ENCODE measurements at regions of chr12 and their contacts with region 1.

Region 1: DNA sequence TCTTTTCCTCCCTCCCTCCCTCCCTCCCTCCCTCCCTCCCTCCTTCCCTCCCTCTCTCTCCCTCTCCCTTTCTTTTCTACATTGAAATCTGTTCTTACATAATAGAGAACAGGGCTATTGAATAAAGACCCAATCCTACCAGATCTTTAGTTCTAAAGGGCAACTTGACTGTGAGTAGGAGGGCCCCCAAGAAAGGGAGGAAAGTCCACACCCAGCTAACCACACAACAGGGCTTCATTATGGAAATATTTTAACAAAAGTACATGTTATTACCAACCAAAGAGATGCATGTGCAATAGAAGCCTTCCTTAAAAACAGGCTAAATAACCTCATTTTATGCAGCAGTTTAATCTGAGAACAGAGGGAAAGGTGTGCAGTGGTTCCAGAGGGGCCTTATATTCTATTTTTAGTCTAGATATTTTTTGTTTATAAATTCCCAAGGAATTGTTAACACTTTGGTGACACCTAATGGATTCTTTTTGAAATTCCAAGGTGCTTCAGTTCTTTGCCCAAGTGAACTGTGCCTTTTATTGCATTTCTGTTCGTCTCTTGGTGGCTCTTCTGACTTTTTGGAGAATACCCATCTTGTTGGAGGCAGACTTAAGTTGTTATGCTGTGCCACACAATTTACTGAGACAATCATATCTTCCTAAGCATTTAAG is 63.0 kb downstream of the GNS start:
- DNase-seq: no peak
- ATAC-seq: no peak
- H3K4me3 ChIP-seq: no peak overlapping the region
- H3K4me3 Mint-ChIP-seq: peak overlapping the region in 8 of 10 donors; percentile 30 to 74 (median 50)
- H3K27ac ChIP-seq: peak overlapping the region; percentile 51
- H3K27ac Mint-ChIP-seq: peak overlapping the region in 8 of 9 donors; percentile 84 to 97 (median 92)
- H3K4me1 ChIP-seq: peaks cover 14 to 79% of the 10 kb centered on the region in 2 donors
- H3K4me1 Mint-ChIP-seq: peaks cover 58 to 86% (median 81%) of the 10 kb centered on the region in 7 donors
- H3K27me3 ChIP-seq: no peaks in the 10 kb centered on the region
- H3K27me3 Mint-ChIP-seq: no peaks in the 10 kb centered on the region

Region 2: GRCh38 chr12:64451687-64452558 is 244.3 kb before region 1 on chr12 and contains the start of gene TBK1:
- CTCF ChIA-PET with region 1: interaction called, 3 read pairs
- POLR2A ChIA-PET with region 1: no interaction called
- intact Hi-C with region 1: loop called in 1 of 2 experiments (anchors 1 kb)
- DNase-seq: peak in 8 of 9 donors; percentile 21 to 80 (median 34)
- ATAC-seq: peak; percentile 78
- H3K4me3 ChIP-seq: peak within 1 kb of the TSS; percentile 61
- H3K4me3 Mint-ChIP-seq: peak within 1 kb of the TSS; percentile 90 to 99 (median 94)
- H3K27ac ChIP-seq: peak within 1 kb of the TSS; percentile 74
- H3K27ac Mint-ChIP-seq: peak within 1 kb of the TSS; percentile 86 to 95 (median 94)
- H3K4me1 ChIP-seq: peaks cover 19 to 24% of the 10 kb centered on the region in 2 donors
- H3K4me1 Mint-ChIP-seq: peaks cover 20 to 54% (median 41%) of the 10 kb centered on the region in 7 donors
- H3K27me3 ChIP-seq: no peaks in the 10 kb centered on the region
- H3K27me3 Mint-ChIP-seq: no peaks in the 10 kb centered on the region
- total RNA-seq, gene TBK1: 9.0 to 34.0 (median 12.1) TPM

Region 3: GRCh38 chr12:64550755-64551154 is 145.5 kb before region 1 on chr12:
- CTCF ChIA-PET with region 1: interaction called, 131 read pairs
- POLR2A ChIA-PET with region 1: interaction called, 12 read pairs
- intact Hi-C with region 1: loop called (anchors 1 kb)
- DNase-seq: no peak
- ATAC-seq: no peak
- H3K4me3 ChIP-seq: no peak overlapping the region
- H3K4me3 Mint-ChIP-seq: no peak overlapping the region
- H3K27ac ChIP-seq: no peak overlapping the region
- H3K27ac Mint-ChIP-seq: peak overlapping the region in 3 of 9 donors; percentile 7 to 83 (median 18)
- H3K4me1 ChIP-seq: peaks cover 0 to 4% of the 10 kb centered on the region in 2 donors
- H3K4me1 Mint-ChIP-seq: peaks cover 2 to 11% (median 9%) of the 10 kb centered on the region in 7 donors
- H3K27me3 ChIP-seq: no peaks in the 10 kb centered on the region
- H3K27me3 Mint-ChIP-seq: peaks cover 0 to 20% (median 0%) of the 10 kb centered on the region in 5 donors

Region 4: GRCh38 chr12:64660237-64661018 is 35.8 kb before region 1 on chr12:
- CTCF ChIA-PET with region 1: interaction called, 5 read pairs
- POLR2A ChIA-PET with region 1: interaction called, 751 read pairs
- intact Hi-C with region 1: loop called in 1 of 2 experiments (anchors 5 kb)
- DNase-seq: no peak
- ATAC-seq: no peak
- H3K4me3 ChIP-seq: no peak overlapping the region
- H3K4me3 Mint-ChIP-seq: peak overlapping the region in 9 of 10 donors; percentile 8 to 68 (median 43)
- H3K27ac ChIP-seq: peak overlapping the region; percentile 32
- H3K27ac Mint-ChIP-seq: peak overlapping the region in 8 of 9 donors; percentile 51 to 97 (median 84)
- H3K4me1 ChIP-seq: peaks cover 54 to 84% of the 10 kb centered on the region in 2 donors
- H3K4me1 Mint-ChIP-seq: peaks cover 60 to 98% (median 89%) of the 10 kb centered on the region in 7 donors
- H3K27me3 ChIP-seq: no peaks in the 10 kb centered on the region
- H3K27me3 Mint-ChIP-seq: no peaks in the 10 kb centered on the region

Region 5: DNA sequence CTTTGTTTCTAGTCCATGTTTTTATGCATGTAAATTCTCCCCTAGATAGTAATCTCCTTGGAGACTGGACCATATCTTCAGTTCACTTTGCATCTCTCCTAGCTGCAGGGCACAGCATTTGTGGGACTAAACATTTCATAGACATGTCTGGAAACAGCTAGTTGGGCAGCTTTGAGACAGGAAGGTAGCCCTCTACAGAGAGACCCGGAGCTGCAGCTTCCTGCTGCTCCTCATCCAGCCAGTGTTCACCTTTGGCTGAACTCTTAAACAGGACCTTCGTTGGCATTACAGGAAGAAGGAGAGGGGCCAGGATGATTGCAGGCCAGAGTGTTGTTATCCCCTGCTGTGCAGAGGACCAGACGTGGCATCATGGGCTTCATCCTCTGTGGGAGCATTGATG is 10.1 kb after region 1 on chr12:
- CTCF ChIA-PET with region 1: interaction called, 11 read pairs
- POLR2A ChIA-PET with region 1: interaction called, 6 read pairs
- intact Hi-C with region 1: no loop called
- DNase-seq: no peak
- ATAC-seq: no peak
- H3K4me3 ChIP-seq: no peak overlapping the region
- H3K4me3 Mint-ChIP-seq: no peak overlapping the region
- H3K27ac ChIP-seq: no peak overlapping the region
- H3K27ac Mint-ChIP-seq: peak overlapping the region in 5 of 9 donors; percentile 10 to 51 (median 14)
- H3K4me1 ChIP-seq: peaks cover 0 to 5% of the 10 kb centered on the region in 2 donors
- H3K4me1 Mint-ChIP-seq: peaks cover 6 to 29% (median 15%) of the 10 kb centered on the region in 7 donors
- H3K27me3 ChIP-seq: no peaks in the 10 kb centered on the region
- H3K27me3 Mint-ChIP-seq: no peaks in the 10 kb centered on the region